ENCODE measurements at regions of chr1 and their contacts with region 1.

Region 1: GRCh38 chr1:212987702-212988322 is 27.9 kb downstream of the ANGEL2 start:
- DNase-seq: no peak
- H3K4me3 ChIP-seq: no peak overlapping the region
- H3K27ac ChIP-seq: no peak overlapping the region
- H3K4me1 ChIP-seq: no peaks in the 10 kb centered on the region
- H3K27me3 ChIP-seq: no peaks in the 10 kb centered on the region
- CTCF ChIP-seq: no peak

Region 2: GRCh38 chr1:212062832-212063438 is 924.9 kb before region 1 on chr1:
- CTCF ChIA-PET with region 1: no interaction called
- POLR2A ChIA-PET with region 1: no interaction called
- intact Hi-C with region 1: loop called (anchors 2 kb)
- DNase-seq: no peak
- H3K4me3 ChIP-seq: no peak overlapping the region
- H3K27ac ChIP-seq: no peak overlapping the region
- H3K4me1 ChIP-seq: no peaks in the 10 kb centered on the region
- H3K27me3 ChIP-seq: no peaks in the 10 kb centered on the region
- CTCF ChIP-seq: peak; percentile 84

Region 3: DNA sequence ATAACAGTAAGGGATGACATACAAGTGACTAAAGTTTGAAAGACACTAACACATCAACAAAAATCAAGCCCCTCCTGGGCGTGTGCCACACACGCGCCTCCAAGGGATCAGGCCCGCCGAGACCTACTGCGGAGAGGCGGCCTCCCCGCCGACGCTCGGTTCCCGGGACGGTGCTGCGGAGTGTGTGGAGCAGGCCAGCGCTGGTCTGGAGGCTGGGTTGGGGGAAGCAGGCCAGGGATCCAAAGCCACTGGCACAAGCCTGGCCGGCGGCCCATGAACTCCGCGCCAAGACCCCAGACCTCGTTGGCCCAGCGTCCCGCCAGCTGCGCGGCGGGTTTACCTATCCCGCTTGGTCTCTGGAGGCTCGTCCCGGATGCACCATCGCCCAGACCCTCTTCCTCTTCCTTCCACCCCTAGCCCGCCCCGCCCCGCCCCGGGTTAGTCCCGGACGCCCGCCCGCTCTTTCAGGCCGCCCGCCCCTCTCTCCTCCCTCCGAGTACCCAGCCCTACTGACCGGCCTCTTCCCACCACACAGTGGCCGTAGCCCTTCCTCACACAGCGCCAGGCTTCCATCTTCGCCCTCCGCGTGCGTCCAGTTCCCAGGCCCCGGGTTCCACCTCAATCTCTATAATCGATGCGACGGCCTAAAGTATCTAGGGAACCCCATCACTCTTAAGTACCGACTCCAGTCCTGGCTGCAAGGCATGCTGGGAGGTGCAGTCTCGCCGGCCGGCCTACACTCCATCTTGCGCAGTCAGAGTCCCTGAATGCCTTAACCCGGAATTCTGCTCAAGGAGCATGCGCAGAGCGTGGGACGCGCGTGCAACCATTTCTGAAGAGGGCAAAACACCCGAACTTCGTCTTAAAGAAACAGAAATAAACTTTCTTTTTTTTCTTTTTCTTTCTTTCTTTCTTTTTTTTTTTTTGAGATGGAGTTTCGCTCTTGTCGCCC is 27.6 kb after region 1 on chr1 and contains the start of gene ANGEL2:
- CTCF ChIA-PET with region 1: no interaction called
- POLR2A ChIA-PET with region 1: no interaction called
- intact Hi-C with region 1: no loop called
- DNase-seq: peak; percentile 90 to 91
- H3K4me3 ChIP-seq: peak within 1 kb of the TSS; percentile 81
- H3K27ac ChIP-seq: peak within 1 kb of the TSS; percentile 65
- H3K4me1 ChIP-seq: peaks cover 15% of the 10 kb centered on the region; the same call in 1 of the 2 replicates
- H3K27me3 ChIP-seq: no peaks in the 10 kb centered on the region
- CTCF ChIP-seq: no peak
- total RNA-seq, gene ANGEL2: 35.4 and 42.6 TPM in 2 replicates